ENCODE measurements at regions of chr2 and their contacts with region 1.

Region 1: GRCh38 chr2:29196792-29197788 is 81.9 kb downstream of the CLIP4 start:
- DNase-seq: peak; percentile 44
- ATAC-seq: peak; percentile 71
- H3K4me3 Mint-ChIP-seq: no peak overlapping the region
- H3K27ac Mint-ChIP-seq: no peak overlapping the region
- H3K4me1 Mint-ChIP-seq: peaks cover 4% of the 10 kb centered on the region
- H3K27me3 Mint-ChIP-seq: no peaks in the 10 kb centered on the region
- CTCF ChIP-seq: peak; percentile 50

Region 2: GRCh38 chr2:27703638-27704341 is 1493.3 kb before region 1 on chr2:
- CTCF ChIA-PET with region 1: no interaction called
- POLR2A ChIA-PET with region 1: no interaction called
- intact Hi-C with region 1: loop called (anchors 10 kb)
- DNase-seq: peak; percentile 55
- ATAC-seq: peak; percentile 79
- H3K4me3 Mint-ChIP-seq: no peak overlapping the region
- H3K27ac Mint-ChIP-seq: no peak overlapping the region
- H3K4me1 Mint-ChIP-seq: peaks cover 3% of the 10 kb centered on the region
- H3K27me3 Mint-ChIP-seq: peaks cover 9% of the 10 kb centered on the region
- CTCF ChIP-seq: peak; percentile 75

Region 3: DNA sequence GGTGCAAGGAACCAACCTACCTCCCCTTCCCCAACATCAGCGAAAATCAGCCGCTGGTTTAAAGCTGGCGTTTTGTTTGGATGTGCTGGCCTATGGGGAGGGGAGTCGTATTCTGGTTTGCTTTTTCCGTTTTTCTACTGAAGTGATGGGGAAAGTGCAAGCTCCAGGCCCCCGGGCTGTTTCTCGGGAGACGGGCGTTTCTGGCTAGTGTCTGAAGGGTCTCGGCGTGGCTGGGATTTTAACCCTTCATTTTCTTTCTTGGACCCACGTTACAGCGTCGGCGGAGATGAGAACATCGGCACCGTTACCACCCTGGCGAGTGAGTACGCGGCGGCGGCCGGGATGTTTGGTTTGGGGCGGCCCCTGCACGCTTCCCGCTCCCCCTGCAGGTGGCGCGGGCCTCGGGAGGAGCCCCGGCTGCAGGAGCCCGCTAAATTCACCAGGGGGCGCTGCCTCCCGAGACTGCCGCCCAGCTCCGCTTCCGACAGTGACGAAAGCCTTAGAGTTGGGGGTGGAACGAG is 630.5 kb before region 1 on chr2:
- CTCF ChIA-PET with region 1: no interaction called
- POLR2A ChIA-PET with region 1: no interaction called
- intact Hi-C with region 1: loop called (anchors 1 kb)
- DNase-seq: peak; percentile 85
- ATAC-seq: peak; percentile 99
- H3K4me3 Mint-ChIP-seq: peak overlapping the region; percentile 93
- H3K27ac Mint-ChIP-seq: peak overlapping the region; percentile 76
- H3K4me1 Mint-ChIP-seq: peaks cover 12% of the 10 kb centered on the region
- H3K27me3 Mint-ChIP-seq: peaks cover 8% of the 10 kb centered on the region
- CTCF ChIP-seq: peak; percentile 23

Region 4: GRCh38 chr2:28821295-28821958 is 375.7 kb before region 1 on chr2:
- CTCF ChIA-PET with region 1: interaction called, 3 read pairs
- POLR2A ChIA-PET with region 1: no interaction called
- intact Hi-C with region 1: loop called (anchors 1 kb)
- DNase-seq: peak; percentile 17
- ATAC-seq: peak; percentile 72
- H3K4me3 Mint-ChIP-seq: no peak overlapping the region
- H3K27ac Mint-ChIP-seq: no peak overlapping the region
- H3K4me1 Mint-ChIP-seq: peaks cover 4% of the 10 kb centered on the region
- H3K27me3 Mint-ChIP-seq: no peaks in the 10 kb centered on the region
- CTCF ChIP-seq: no peak

Region 5: DNA sequence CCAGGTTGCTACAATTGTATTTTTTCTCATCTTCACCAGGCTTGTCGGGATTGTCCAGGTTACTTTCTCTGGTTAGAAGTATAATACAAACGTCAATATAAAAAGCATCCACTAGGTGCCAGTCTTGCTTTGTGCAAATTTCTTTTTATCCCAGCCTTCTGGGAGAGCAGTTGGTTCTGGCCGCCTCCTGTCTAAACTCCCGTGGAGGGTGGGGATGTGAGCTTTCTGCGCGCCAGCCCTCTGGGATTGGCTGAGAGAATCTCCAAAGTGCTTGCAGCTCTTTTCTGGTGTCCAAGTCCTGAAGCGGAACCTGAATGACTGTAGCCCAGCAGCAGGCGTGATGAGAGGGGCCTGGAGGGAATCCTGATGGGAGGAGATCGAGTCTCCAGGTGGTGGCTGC is 238.4 kb before region 1 on chr2:
- CTCF ChIA-PET with region 1: interaction called, 4 read pairs
- POLR2A ChIA-PET with region 1: no interaction called
- intact Hi-C with region 1: loop called (anchors 1 kb)
- DNase-seq: no peak
- ATAC-seq: peak; percentile 52
- H3K4me3 Mint-ChIP-seq: no peak overlapping the region
- H3K27ac Mint-ChIP-seq: no peak overlapping the region
- H3K4me1 Mint-ChIP-seq: no peaks in the 10 kb centered on the region
- H3K27me3 Mint-ChIP-seq: peaks cover 5% of the 10 kb centered on the region
- CTCF ChIP-seq: no peak

Region 6: GRCh38 chr2:29295857-29296256 is 98.8 kb after region 1 on chr2:
- CTCF ChIA-PET with region 1: no interaction called
- POLR2A ChIA-PET with region 1: no interaction called
- intact Hi-C with region 1: no loop called
- DNase-seq: no peak
- ATAC-seq: no peak
- H3K4me3 Mint-ChIP-seq: no peak overlapping the region
- H3K27ac Mint-ChIP-seq: no peak overlapping the region
- H3K4me1 Mint-ChIP-seq: no peaks in the 10 kb centered on the region
- H3K27me3 Mint-ChIP-seq: peaks cover 20% of the 10 kb centered on the region
- CTCF ChIP-seq: no peak

Region 7: DNA sequence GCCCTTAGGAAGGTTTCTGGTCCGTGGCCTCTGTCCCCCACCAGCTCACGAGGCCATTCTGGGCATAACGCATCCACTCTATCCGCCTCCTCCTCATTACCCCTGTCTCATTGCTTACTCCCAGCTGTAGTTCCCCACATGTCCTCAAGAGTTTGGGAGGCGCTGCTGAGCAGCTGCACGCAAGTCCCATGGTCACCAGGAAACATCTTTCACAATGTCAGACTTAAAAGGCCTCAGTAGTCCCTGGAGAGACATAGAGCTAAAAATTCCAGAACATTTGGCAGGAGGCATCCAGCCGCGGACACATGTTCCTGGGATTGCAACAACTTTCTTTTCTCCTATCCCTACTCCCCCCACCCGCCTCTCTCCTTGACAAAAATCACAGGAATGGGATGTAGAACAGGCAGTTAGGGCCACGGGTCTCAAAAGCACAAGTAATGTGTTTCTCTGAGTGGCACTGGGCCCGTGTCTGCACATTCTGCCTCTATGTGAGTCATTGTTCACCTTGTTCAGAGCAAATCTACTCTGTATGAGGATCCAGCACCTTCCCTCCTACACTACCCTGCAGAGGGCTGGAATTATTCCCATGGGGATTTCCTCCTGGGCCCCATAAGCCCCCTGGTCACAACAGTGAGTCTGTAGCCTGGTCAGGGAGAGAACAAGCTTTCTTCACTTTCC is 1042.4 kb after region 1 on chr2:
- CTCF ChIA-PET with region 1: no interaction called
- POLR2A ChIA-PET with region 1: no interaction called
- intact Hi-C with region 1: no loop called
- DNase-seq: peak; percentile 60
- ATAC-seq: peak; percentile 71
- H3K4me3 Mint-ChIP-seq: peak overlapping the region; percentile 21
- H3K27ac Mint-ChIP-seq: peak overlapping the region; percentile 94
- H3K4me1 Mint-ChIP-seq: peaks cover 92% of the 10 kb centered on the region
- H3K27me3 Mint-ChIP-seq: no peaks in the 10 kb centered on the region
- CTCF ChIP-seq: peak; percentile 44